SK-N-SH (cell line): ENCODE measurements at regions of chr19 and their contacts with region 1.

Region 1: DNA sequence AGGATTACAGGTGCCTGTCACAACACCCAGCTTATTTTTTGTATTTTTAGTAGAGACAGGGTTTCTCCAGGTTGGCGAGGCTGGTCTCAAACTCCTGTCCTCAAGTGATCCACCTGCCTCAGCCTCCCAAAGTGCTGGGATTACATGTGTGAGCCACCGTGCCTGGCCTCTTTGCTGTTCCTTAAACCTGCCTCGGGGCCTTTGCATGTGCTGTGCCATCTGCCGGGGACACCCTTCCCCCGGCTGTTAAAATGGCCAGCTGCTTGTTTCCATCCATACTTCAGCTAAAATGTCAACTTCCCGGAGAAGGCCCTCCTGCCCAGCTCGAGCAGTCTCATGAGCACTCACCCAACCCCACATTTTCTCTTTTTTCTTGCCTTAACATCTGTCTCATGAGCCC is 19.1 kb upstream of the PDE4C start:
- DNase-seq: no peak
- H3K4me3 ChIP-seq: no peak overlapping the region
- H3K27ac ChIP-seq: no peak overlapping the region
- H3K4me1 ChIP-seq: no peaks in the 10 kb centered on the region
- H3K27me3 ChIP-seq: no peaks in the 10 kb centered on the region
- CTCF ChIP-seq: no peak
- EP300 ChIP-seq: no peak
- RAD21 ChIP-seq: no peak

Region 2: DNA sequence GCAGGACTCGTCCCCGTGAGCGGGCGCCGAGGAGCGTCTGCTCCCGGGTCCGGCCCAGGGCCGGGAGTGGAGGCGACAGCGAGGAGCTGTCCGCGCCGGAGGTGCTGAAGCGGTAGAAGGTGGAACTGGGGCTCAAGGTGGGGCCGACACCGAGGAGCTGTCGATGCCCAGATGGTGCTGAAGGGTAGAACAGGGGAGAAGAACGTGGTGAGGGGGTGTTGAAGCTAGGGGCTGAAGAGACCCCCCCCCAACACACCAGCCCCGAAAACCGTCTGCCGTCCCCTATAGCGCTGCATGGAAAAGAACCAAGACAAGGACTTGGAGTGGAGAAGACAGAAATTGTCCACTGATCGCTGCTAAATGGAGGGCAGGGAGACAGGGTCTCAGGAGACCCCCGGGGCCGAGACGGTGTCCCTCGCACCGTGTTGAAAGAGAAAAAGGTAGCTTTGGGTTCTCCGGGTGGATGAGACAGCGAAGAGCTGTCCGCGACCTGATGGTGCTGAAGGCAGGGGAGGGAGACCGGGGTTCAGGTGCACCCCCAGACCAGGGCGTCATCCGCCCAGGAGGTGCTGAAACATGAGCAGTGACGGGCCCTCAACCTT is 12.0 kb before region 1 on chr19:
- CTCF ChIA-PET with region 1: interaction called, 82 read pairs
- POLR2A ChIA-PET with region 1: interaction called, 4 read pairs
- DNase-seq: peak; percentile 83
- H3K4me3 ChIP-seq: peak overlapping the region; percentile 35 to 42; a peak in 3 of 4 replicates
- H3K27ac ChIP-seq: no peak overlapping the region; a peak in 1 of 4 replicates
- H3K4me1 ChIP-seq: peaks cover 0 to 11% of the 10 kb centered on the region in 2 experiments; a peak in 1 of 4 replicates
- H3K27me3 ChIP-seq: no peaks in the 10 kb centered on the region
- CTCF ChIP-seq: no peak
- EP300 ChIP-seq: no peak
- RAD21 ChIP-seq: no peak

Region 3: GRCh38 chr19:18261474-18261873 is 16.2 kb after region 1 on chr19:
- CTCF ChIA-PET with region 1: no interaction called
- POLR2A ChIA-PET with region 1: no interaction called
- DNase-seq: no peak
- H3K4me3 ChIP-seq: no peak overlapping the region
- H3K27ac ChIP-seq: no peak overlapping the region
- H3K4me1 ChIP-seq: no peaks in the 10 kb centered on the region
- H3K27me3 ChIP-seq: no peaks in the 10 kb centered on the region
- CTCF ChIP-seq: no peak
- EP300 ChIP-seq: no peak
- RAD21 ChIP-seq: no peak

Region 4: GRCh38 chr19:18328340-18329034 is 83.2 kb after region 1 on chr19:
- CTCF ChIA-PET with region 1: no interaction called
- POLR2A ChIA-PET with region 1: no interaction called
- DNase-seq: peak; percentile 94
- H3K4me3 ChIP-seq: peak overlapping the region; percentile 39 to 52
- H3K27ac ChIP-seq: peak overlapping the region; percentile 63 to 84
- H3K4me1 ChIP-seq: peaks cover 10 to 14% of the 10 kb centered on the region in 2 experiments; a peak in 2 of 4 replicates
- H3K27me3 ChIP-seq: no peaks in the 10 kb centered on the region
- CTCF ChIP-seq: peak; percentile 93
- EP300 ChIP-seq: peak in 1 of 2 experiments; percentile 53; a peak in 2 of 4 replicates
- RAD21 ChIP-seq: peak; percentile 90